H1 (cell line): ENCODE measurements at regions of chr18 and their contacts with region 1.

Region 1: DNA sequence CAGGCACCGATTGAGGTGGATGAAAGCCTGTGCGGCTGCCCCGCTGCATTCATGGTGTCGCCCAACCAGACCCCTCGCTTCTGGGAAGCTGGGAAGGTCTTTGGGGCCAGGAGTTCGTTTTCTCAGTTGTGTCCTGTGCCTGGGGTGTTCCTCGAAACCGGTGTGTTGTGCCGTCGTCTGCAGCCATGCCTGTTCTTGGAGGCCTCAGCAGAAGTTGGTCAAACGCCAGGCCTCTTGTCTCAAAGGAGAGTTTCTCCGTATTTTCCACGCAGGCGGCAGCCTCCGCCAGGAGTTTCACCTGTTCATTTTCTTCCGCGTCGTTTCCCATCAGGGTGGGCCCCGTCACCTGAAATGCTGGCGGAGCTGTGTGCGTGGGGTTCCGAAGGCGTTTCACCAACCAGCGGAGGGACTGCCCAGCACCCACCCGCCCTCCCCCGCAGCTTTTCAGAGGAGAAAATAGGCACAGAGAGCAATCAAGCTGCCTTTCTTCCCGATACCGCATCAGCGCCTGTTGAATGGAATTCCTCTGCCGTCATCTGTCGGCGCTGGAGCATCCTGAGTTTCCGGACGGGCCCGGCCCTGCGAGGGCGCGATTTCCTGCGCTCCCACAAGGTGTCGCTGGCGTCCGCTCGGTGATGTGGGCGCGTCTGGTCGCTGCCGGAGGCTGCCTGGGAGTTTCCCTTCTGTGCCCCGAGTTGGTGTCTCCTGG is 17.0 kb upstream of the NFATC1 start:
- DNase-seq: peak; percentile 66 to 99
- H3K4me3 ChIP-seq: peak overlapping the region in 2 of 4 experiments; percentile 10 to 27; a peak in 2 of 8 replicates
- H3K27ac ChIP-seq: no peak overlapping the region
- H3K4me1 ChIP-seq: peaks cover 0 to 6% (median 2%) of the 10 kb centered on the region in 4 experiments; a peak in 2 of 7 replicates
- H3K27me3 ChIP-seq: no peaks in the 10 kb centered on the region; a peak in 1 of 7 replicates
- CTCF ChIP-seq: peak in 2 of 3 experiments; percentile 96 to 98; a peak in 3 of 4 replicates
- EP300 ChIP-seq: no peak; a peak in 1 of 3 replicates
- POLR2A ChIP-seq: peak in 1 of 2 experiments; percentile 35; a peak in 1 of 3 replicates
- RAD21 ChIP-seq: peak; percentile 90 to 91

Region 2: GRCh38 chr18:79217979-79218604 is 160.6 kb before region 1 on chr18:
- CTCF ChIA-PET with region 1: no interaction called
- POLR2A ChIA-PET with region 1: no interaction called
- DNase-seq: no peak
- H3K4me3 ChIP-seq: no peak overlapping the region
- H3K27ac ChIP-seq: no peak overlapping the region
- H3K4me1 ChIP-seq: no peaks in the 10 kb centered on the region
- H3K27me3 ChIP-seq: no peaks in the 10 kb centered on the region
- CTCF ChIP-seq: no peak
- EP300 ChIP-seq: no peak
- POLR2A ChIP-seq: no peak
- RAD21 ChIP-seq: no peak

Region 3: GRCh38 chr18:79393635-79394533 is 15.2 kb after region 1 on chr18:
- CTCF ChIA-PET with region 1: interaction called, 62 read pairs
- POLR2A ChIA-PET with region 1: interaction called, 3 read pairs
- DNase-seq: peak in 1 of 2 experiments; percentile 78
- H3K4me3 ChIP-seq: peak overlapping the region; percentile 9 to 66 (median 30)
- H3K27ac ChIP-seq: no peak overlapping the region
- H3K4me1 ChIP-seq: peaks cover 0 to 12% (median 7%) of the 10 kb centered on the region in 4 experiments; a peak in 5 of 7 replicates
- H3K27me3 ChIP-seq: peaks cover 39 to 68% (median 58%) of the 10 kb centered on the region in 4 experiments
- CTCF ChIP-seq: no peak
- EP300 ChIP-seq: no peak
- POLR2A ChIP-seq: no peak
- RAD21 ChIP-seq: no peak

Region 4: DNA sequence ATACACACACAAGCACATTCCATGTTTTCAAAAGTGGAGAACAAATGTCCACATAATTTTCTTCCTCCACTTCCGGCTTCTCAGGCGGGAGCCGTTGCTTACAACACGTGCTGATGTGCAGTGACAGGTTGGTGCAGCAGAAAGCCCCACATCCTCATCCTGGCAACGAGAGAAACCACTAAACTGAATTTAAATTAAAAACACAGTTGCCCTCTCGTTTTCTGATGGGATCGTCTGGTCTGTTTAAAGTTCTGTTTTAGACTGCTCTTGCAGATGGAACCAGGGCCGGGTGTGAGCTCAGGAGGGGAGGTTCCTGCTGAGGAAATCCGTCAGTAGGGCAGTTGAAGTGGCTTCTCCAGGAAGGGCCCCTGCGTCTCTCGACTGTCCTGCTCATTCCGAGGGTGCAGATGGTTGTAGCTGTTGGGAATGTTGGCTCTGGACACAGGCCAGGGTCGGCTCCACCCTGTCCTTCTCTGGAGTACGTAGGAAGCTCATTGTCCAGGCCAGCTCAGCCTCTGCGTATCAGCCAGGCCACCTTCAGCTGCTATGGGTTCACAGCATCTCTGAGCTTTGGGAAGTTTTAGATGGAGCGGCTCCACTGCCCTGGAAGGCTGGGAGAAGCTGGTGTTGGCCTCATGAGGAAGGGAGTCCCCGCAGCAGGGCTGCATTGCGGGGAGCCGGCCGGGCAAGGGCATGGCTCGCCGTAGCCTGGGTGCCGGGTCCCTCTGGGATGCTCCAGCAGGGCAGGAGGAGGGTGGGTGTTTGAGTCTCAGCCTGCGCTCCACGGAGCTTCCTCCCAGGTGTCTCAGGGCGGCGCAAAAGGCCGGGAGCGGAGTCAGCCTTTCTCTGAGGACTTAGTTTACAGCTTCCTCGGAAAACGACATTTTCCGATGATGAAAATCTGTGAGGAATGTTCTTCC is 75.4 kb after region 1 on chr18:
- CTCF ChIA-PET with region 1: interaction called, 15 read pairs
- POLR2A ChIA-PET with region 1: no interaction called
- DNase-seq: no peak
- H3K4me3 ChIP-seq: no peak overlapping the region
- H3K27ac ChIP-seq: no peak overlapping the region
- H3K4me1 ChIP-seq: no peaks in the 10 kb centered on the region
- H3K27me3 ChIP-seq: no peaks in the 10 kb centered on the region
- CTCF ChIP-seq: no peak
- EP300 ChIP-seq: no peak
- POLR2A ChIP-seq: no peak
- RAD21 ChIP-seq: no peak

Region 5: GRCh38 chr18:79477711-79478483 is 99.2 kb after region 1 on chr18:
- CTCF ChIA-PET with region 1: no interaction called
- POLR2A ChIA-PET with region 1: no interaction called
- DNase-seq: no peak
- H3K4me3 ChIP-seq: no peak overlapping the region
- H3K27ac ChIP-seq: no peak overlapping the region
- H3K4me1 ChIP-seq: no peaks in the 10 kb centered on the region
- H3K27me3 ChIP-seq: no peaks in the 10 kb centered on the region
- CTCF ChIP-seq: no peak
- EP300 ChIP-seq: no peak
- POLR2A ChIP-seq: no peak
- RAD21 ChIP-seq: no peak

Region 6: GRCh38 chr18:79528846-79529245 is 150.2 kb after region 1 on chr18:
- CTCF ChIA-PET with region 1: interaction called, 124 read pairs
- POLR2A ChIA-PET with region 1: no interaction called
- DNase-seq: peak; percentile 34 to 92
- H3K4me3 ChIP-seq: no peak overlapping the region
- H3K27ac ChIP-seq: no peak overlapping the region
- H3K4me1 ChIP-seq: peaks cover 0 to 12% (median 5%) of the 10 kb centered on the region in 4 experiments; a peak in 5 of 7 replicates
- H3K27me3 ChIP-seq: peaks cover 0 to 2% (median 0%) of the 10 kb centered on the region in 4 experiments; a peak in 3 of 7 replicates
- CTCF ChIP-seq: peak in 2 of 3 experiments; percentile 83 to 93; a peak in 3 of 4 replicates
- EP300 ChIP-seq: no peak
- POLR2A ChIP-seq: no peak
- RAD21 ChIP-seq: peak; percentile 93

Region 7: DNA sequence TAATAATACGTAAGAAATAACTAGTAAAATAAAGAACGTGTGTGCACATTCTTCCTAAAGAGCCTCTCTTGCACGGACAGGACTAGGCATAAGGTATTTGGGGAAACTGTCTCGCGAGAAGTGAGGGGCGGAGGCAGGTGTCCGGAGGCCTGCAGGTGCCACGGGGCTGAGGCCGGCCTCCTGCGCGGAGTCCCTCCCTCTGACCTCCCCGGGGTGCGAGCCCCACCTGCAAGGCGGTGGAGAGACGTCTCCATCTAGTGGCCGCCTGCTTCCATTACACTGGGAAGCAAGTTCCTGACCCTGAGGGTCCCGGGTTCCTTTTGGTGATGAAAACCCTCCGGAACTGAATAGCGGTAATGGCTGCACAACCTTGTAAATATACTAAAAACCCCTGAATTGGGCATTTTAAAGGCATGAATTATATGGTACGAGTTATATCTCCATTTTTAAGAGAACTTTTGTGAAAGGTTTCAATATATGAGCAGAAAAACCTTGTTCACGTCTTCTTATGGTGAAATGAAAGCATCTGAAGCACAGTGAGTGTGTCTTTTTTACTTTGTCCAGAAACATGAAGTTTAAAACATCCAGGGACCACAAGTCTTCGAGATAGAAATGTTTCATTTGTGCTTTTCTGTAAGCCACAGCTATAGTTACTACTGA is 265.4 kb after region 1 on chr18:
- CTCF ChIA-PET with region 1: interaction called, 35 read pairs
- POLR2A ChIA-PET with region 1: interaction called, 3 read pairs
- DNase-seq: peak in 1 of 2 experiments; percentile 90
- H3K4me3 ChIP-seq: no peak overlapping the region
- H3K27ac ChIP-seq: no peak overlapping the region
- H3K4me1 ChIP-seq: no peaks in the 10 kb centered on the region
- H3K27me3 ChIP-seq: peaks cover 0 to 4% (median under 1%) of the 10 kb centered on the region in 4 experiments; a peak in 4 of 7 replicates
- CTCF ChIP-seq: peak; percentile 88 to 93 (median 92)
- EP300 ChIP-seq: 0 out of 3 replicates have a peak, but pooled peaks of 1 of the 2 experiments have one; percentile 26
- POLR2A ChIP-seq: no peak
- RAD21 ChIP-seq: peak; percentile 99